GM10248 (cell line): ENCODE measurements at regions of chr17 and their contacts with region 1.

Region 1: DNA sequence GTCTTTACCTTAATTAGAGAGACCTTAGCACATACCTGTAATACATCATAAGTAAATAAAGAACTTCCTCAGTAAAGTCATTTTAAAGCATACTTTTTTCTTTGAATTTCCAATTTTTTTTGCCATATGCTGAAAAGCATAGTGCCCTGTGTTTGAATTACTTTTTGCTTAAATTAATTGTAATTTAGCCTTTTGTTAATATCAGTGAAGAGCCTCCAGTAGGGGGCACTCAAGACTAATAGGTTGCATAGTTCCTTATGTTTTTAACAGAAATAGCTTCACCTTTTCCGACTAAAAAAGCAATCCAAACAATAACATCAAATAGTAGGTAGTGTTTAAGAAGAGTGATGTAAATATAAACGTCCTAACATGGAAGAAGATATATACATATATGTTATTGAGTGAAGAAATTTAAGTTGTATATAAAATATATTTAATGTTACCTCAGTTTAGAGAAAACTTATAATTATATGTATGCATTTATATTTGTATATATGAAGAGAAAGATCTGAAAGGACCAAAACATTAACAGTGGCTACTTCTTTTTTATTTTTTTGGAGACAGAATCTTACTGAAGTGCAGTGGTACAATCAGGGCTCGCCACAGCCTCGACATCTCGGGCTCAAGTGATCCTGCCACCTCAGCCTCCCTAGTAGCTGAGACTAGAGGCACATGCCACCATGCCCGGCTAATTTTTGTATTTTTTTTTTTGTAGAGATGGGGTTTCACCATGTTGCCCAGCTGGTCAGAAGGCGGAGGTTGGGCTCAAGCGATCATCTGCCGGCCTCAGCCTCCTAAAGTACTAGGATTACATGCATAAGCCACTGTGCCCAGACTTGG is 18.8 kb downstream of the RAD51C start:
- DNase-seq: no peak
- CTCF ChIP-seq: peak; percentile 51

Region 2: DNA sequence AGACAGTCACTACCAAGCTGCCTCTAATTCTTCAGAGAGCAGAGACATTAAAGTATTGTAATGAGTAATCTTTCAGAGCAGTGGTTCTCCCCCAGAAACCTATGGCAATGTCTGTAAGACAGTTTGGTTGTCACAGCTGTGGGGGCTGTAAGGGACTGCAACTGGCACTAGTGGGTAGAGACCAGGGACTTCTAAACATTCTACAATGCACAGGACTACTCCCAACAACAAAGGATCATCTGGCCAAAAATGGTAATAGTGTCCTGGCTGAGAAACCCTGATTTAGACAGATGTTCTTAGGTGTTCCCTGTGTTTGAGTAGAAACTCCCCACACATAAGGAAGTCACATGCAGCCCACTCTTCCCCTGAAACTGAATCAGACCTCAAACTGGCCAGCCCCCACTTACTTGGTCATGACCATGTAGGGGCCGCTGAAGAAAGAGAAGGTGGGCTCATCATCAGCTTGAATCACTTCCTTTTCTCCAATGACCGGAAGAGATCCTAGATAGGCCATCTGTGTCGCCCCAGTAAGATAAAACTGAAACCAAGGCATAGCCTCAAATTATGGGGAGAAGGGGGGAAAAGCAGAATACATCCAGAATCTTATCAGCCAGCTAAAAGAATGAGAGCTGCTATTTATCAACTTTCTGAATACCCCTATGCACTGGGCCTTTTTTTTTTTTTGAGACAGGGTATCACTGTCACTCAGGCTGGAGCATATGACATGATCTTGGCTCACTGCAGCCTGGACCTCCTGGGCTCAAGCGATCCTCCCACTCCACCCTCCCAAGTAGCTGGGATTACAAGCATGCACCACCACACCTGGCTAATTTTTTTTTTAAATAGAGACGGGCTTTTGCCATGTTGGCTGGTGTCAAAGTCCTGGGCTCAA is 95.1 kb before region 1 on chr17:
- CTCF ChIA-PET with region 1: no interaction called
- POLR2A ChIA-PET with region 1: no interaction called
- DNase-seq: peak; percentile 73
- CTCF ChIP-seq: no peak

Region 3: DNA sequence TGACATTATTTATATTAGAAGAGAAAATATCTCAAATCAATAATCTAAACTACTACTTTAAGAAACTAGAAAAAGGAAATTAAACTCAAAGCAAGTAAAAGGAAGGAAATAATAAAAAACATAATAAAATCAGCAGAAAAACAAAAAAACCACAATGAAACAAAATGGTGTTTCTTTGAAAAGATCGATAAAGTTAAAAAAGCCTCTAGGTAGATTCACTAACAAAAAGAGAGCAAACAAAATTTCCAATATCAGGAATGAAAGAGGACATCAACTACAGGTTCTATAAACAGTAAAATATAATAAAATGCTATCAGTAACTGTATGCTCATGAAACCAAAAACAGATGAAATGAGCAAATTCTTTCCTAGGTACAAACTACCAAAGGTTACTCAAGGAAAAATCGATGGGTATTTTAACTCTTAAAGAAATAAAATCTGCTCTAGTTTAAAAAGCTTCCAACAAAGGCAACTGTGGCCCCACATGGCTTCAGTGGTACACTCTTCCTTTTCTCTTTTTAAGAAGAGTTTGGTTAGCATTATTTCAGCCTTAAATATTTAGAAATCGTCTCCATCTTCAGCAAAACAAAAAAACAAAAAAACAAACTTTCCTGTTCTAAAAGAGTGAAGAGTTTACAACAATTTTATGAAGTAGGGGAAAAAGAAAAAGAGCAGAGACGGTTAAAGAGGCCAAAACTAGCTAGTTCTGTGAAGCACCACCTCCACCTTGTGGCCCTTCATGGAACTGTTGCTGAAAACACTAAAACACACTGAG is 293.4 kb after region 1 on chr17:
- CTCF ChIA-PET with region 1: interaction called, 26 read pairs
- POLR2A ChIA-PET with region 1: no interaction called
- DNase-seq: peak; percentile 57
- CTCF ChIP-seq: peak; percentile 88